ENCODE measurements at regions of chr12 and their contacts with region 1.

Region 1: GRCh38 chr12:6944381-6945186 is 762 bp downstream of the C12orf57 start:
- DNase-seq: peak; percentile 59
- H3K4me3 ChIP-seq: peak overlapping the region; percentile 40 to 77 (median 70)
- H3K27ac ChIP-seq: peak overlapping the region; percentile 91 to 98 (median 97)
- H3K4me1 ChIP-seq: peaks cover 20 to 78% (median 35%) of the 10 kb centered on the region in 3 donors
- H3K27me3 ChIP-seq: no peaks in the 10 kb centered on the region
- CTCF ChIP-seq: peak; percentile 77 to 98 (median 94)
- POLR2A ChIP-seq: peak in 2 of 4 donors; percentile 3 to 22

Region 2: DNA sequence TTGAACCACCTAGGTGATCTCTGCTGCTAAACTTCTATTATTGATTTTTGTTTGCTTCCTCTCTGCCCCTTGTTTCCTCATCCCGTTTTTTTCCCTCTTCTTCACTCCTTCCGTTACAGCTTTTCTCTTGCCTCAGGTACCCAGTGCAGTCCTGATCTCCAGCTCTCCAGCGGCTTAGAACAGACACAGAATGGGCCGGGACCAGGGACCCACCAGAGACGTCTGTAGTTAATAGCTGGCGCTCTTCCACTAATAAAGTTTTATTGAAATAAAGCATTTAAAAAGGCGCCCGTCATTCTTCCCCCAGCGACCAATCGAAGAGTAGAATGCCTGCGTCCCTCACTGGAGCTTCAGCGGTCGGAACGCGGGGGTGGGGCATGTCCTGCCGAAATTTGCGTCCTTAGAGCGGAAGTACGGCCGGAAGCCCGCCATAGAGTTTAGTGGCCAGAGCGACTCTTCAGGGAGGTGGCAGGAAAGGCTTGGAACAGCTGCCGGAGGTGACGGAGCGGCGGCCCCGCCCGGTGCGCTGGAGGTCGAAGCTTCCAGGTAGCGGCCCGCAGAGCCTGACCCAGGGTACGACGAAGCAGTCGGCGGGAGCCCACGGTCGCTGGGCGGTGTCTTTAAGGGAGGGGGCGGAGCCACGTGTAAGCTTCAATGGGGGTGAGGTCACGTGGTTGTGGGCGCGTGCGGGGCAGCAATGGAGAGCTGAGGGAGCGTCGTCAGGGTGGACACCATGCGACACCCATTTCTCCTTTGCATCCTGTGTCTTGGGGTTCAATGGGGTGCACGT is 220.8 kb before region 1 on chr12 and contains the start of gene COPS7A:
- intact Hi-C with region 1: no loop called
- DNase-seq: peak; percentile 94
- H3K4me3 ChIP-seq: peak within 1 kb of the TSS; percentile 42 to 80 (median 59)
- H3K27ac ChIP-seq: peak within 1 kb of the TSS; percentile 82 to 96 (median 88)
- H3K4me1 ChIP-seq: peaks cover 0 to 21% (median 8%) of the 10 kb centered on the region in 3 donors
- H3K27me3 ChIP-seq: no peaks in the 10 kb centered on the region
- CTCF ChIP-seq: no peak
- POLR2A ChIP-seq: peak in 3 of 4 donors; percentile 54 to 63 (median 55)
- total RNA-seq, gene COPS7A: 39.6 to 57.5 (median 49.1) TPM

Region 3: GRCh38 chr12:6883683-6884082 is 60.9 kb before region 1 on chr12:
- intact Hi-C with region 1: no loop called
- DNase-seq: no peak
- H3K4me3 ChIP-seq: no peak overlapping the region
- H3K27ac ChIP-seq: no peak overlapping the region
- H3K4me1 ChIP-seq: peaks cover 0 to 21% (median 3%) of the 10 kb centered on the region in 3 donors
- H3K27me3 ChIP-seq: no peaks in the 10 kb centered on the region
- CTCF ChIP-seq: no peak
- POLR2A ChIP-seq: no peak

Region 4: DNA sequence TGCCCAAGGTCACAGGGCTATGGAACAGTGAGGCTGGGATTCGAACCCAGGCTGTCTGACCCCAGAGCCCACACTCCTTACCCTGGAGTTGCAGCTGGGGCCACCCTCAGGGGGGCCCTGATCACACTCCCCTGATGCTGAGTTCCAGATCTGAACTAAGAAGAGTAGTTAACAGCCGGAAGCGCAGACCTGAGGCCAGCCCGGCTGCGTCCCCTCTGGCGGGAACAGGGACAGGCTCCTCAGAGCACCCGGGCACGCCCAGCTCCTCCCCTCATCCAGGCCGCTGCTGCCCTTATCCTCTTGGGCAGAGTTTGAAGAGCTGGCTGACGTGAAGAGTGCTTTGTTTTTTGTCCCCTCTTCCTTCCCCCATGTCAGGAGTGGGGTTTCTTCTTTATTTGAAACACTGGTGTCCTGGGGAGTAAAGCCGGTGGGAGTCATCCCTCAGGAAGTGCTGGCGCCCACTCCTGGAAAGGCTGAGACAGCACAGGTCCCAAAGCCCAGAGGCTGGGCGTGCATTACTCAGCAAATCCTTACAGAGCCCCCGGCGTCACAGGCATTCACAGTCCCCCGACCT is 17.2 kb after region 1 on chr12:
- intact Hi-C with region 1: loop called (anchors 2 kb)
- DNase-seq: no peak
- H3K4me3 ChIP-seq: peak overlapping the region; percentile 61 to 72 (median 70)
- H3K27ac ChIP-seq: peak overlapping the region; percentile 91 to 99 (median 96)
- H3K4me1 ChIP-seq: peaks cover 34 to 91% (median 66%) of the 10 kb centered on the region in 3 donors
- H3K27me3 ChIP-seq: no peaks in the 10 kb centered on the region
- CTCF ChIP-seq: peak in 5 of 6 experiments; percentile 3 to 50 (median 23)
- POLR2A ChIP-seq: no peak

Region 5: DNA sequence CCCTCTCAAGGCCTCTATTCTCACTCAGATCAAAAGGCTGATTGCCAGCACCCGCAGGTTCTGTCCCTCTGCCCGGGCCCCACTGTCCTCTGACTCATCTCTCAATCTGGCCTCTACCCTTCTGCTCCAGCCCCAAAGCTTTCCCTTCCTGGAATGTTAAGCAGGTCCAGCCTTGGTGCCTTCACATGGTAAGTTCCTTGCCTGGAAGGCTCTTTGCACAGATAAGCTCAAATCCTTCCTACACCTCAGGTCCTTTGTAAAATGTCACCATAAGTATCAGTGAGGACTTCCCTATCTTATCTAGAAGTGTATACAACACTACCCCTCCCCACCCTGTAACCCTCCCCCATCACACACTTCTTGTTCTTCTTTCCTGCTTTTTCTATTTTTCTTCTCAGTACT is 51.5 kb after region 1 on chr12:
- intact Hi-C with region 1: no loop called
- DNase-seq: no peak
- H3K4me3 ChIP-seq: no peak overlapping the region
- H3K27ac ChIP-seq: no peak overlapping the region
- H3K4me1 ChIP-seq: peaks cover 3 to 31% (median 8%) of the 10 kb centered on the region in 3 donors
- H3K27me3 ChIP-seq: no peaks in the 10 kb centered on the region
- CTCF ChIP-seq: no peak
- POLR2A ChIP-seq: no peak

Measured in esophagus squamous epithelium (tissue), 5 donors.